GM12878 (cell line): ENCODE measurements at regions of chr13 and their contacts with region 1.

Region 1: DNA sequence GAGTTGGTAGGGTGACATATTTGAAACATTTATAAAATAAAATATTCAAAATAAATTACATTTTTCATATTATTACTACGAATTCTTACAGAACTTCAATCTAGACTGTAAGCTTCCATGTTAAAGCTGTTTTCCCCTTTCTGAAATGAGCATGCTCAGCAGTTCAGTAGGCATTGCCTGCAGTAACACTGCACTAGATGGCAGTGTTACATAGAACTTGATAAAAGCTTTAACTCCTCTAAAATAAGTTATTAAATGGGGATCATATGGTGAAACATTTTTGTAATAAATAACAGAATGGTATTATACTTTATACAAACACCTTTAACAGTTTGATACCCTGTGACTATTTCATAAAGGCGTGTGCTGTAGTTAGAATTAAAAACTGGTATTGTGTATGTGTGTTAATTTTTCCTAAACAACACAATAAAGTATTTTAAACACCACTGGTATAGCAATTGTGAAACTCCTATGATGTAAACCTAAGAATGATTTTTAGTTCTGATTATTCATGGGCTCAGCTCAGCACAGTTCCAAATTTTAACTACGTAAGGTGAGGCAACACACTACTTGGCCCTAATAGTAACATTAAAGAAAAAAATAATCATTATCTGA is 11.6 kb upstream of the GPR18 start:
- DNase-seq: no peak
- ATAC-seq: peak; percentile 89
- H3K4me3 ChIP-seq: no peak overlapping the region
- H3K27ac ChIP-seq: peak overlapping the region; percentile 37; the same call in 1 of the 2 replicates
- H3K4me1 ChIP-seq: peaks cover 24% of the 10 kb centered on the region
- H3K27me3 ChIP-seq: no peaks in the 10 kb centered on the region
- CTCF ChIP-seq: peak; percentile 74 to 85 (median 81)
- EP300 ChIP-seq: no peak
- POLR2A ChIP-seq: no peak
- RAD21 ChIP-seq: peak; percentile 91

Region 2: GRCh38 chr13:98761126-98761985 is 508.4 kb before region 1 on chr13:
- CTCF ChIA-PET with region 1: no interaction called
- POLR2A ChIA-PET with region 1: no interaction called
- RAD21 ChIA-PET with region 1: no interaction called
- SMC1A ChIA-PET with region 1: no interaction called
- in situ Hi-C with region 1: no loop called
- intact Hi-C with region 1: no loop called
- DNase-seq: peak; percentile 11
- ATAC-seq: peak; percentile 92
- H3K4me3 ChIP-seq: peak overlapping the region; percentile 19; the same call in 1 of the 2 replicates
- H3K27ac ChIP-seq: no peak overlapping the region
- H3K4me1 ChIP-seq: no peaks in the 10 kb centered on the region; the same call in 1 of the 2 replicates
- H3K27me3 ChIP-seq: no peaks in the 10 kb centered on the region; a peak in 1 of 4 replicates
- CTCF ChIP-seq: no peak
- EP300 ChIP-seq: no peak
- POLR2A ChIP-seq: no peak
- RAD21 ChIP-seq: no peak

Region 3: DNA sequence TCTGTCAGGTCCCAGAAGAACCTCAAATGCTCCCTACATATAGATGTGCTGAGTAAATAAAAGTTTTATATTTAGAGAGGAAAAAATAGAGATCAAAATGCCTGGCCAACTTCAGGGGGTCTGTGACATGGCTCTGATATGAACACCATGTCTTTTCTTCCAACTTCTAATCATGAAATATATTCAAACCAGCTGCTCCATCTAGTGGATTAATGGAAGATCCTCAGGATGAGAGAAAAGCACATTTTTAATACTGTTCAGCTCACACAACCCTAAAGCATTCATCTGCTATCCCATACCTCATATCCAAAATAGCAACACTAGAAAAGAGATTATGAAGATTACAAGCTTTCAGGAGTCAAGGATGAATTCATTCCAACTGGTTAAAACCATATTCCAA is 235.9 kb before region 1 on chr13:
- CTCF ChIA-PET with region 1: interaction called, 20 read pairs
- POLR2A ChIA-PET with region 1: no interaction called
- RAD21 ChIA-PET with region 1: interaction called, 11 read pairs
- SMC1A ChIA-PET with region 1: interaction called, 5 read pairs
- in situ Hi-C with region 1: no loop called
- intact Hi-C with region 1: loop called (anchors 5 kb)
- DNase-seq: no peak
- ATAC-seq: peak; percentile 44; the same call in 2 of the 3 replicates
- H3K4me3 ChIP-seq: no peak overlapping the region
- H3K27ac ChIP-seq: no peak overlapping the region
- H3K4me1 ChIP-seq: no peaks in the 10 kb centered on the region
- H3K27me3 ChIP-seq: no peaks in the 10 kb centered on the region
- CTCF ChIP-seq: peak; percentile 35 to 38 (median 37); a peak in 4 of 6 replicates
- EP300 ChIP-seq: no peak
- POLR2A ChIP-seq: no peak
- RAD21 ChIP-seq: peak; percentile 58

Region 4: GRCh38 chr13:99228737-99229691 is 40.7 kb before region 1 on chr13:
- CTCF ChIA-PET with region 1: interaction called, 11 read pairs
- POLR2A ChIA-PET with region 1: no interaction called
- RAD21 ChIA-PET with region 1: interaction called, 4 read pairs
- SMC1A ChIA-PET with region 1: interaction called, 9 read pairs
- in situ Hi-C with region 1: no loop called
- intact Hi-C with region 1: no loop called
- DNase-seq: peak; percentile 91
- ATAC-seq: peak; percentile 90
- H3K4me3 ChIP-seq: peak overlapping the region; percentile 42; the same call in 1 of the 2 replicates
- H3K27ac ChIP-seq: peak overlapping the region; percentile 87
- H3K4me1 ChIP-seq: peaks cover 49% of the 10 kb centered on the region
- H3K27me3 ChIP-seq: no peaks in the 10 kb centered on the region
- CTCF ChIP-seq: no peak
- EP300 ChIP-seq: peak; percentile 93 to 96
- POLR2A ChIP-seq: no peak
- RAD21 ChIP-seq: 0 out of 2 replicates have a peak, but pooled peaks have one; percentile 23

Region 5: DNA sequence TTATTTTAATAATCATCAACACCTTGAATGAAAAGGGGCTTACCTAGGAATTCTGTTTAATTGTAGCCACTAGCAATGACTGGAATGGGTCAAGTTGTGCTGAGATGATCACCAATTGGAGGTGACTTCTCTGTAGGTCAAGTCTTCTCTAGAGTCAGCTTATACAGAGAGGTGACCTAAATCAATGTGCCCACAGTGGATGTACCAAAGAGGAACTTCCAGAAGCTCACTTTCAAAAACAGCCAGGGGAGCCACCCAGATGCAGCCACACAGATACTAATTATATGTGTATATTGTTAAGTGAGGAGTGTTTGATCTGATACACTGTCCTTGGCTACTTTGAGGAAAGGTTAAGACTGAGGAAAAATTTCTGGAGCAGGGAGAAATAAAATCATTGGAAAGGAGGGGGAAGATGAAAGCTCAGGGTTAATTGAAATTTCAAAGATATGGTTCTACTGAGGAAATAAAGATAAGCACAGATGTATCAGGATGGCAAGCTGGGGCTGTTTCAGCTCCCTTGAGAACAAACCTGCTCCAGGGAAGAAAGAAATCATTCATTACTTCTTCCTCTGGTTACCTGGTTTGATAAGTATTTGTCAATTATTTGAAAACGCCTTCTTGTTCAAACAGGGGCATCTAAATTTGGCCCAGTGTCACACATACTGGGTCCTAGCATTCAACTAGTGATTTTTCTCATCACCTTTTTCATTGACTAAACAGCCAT is 32.3 kb after region 1 on chr13:
- CTCF ChIA-PET with region 1: interaction called, 61 read pairs
- POLR2A ChIA-PET with region 1: interaction called, 4 read pairs
- RAD21 ChIA-PET with region 1: interaction called, 247 read pairs
- SMC1A ChIA-PET with region 1: interaction called, 264 read pairs
- in situ Hi-C with region 1: no loop called
- intact Hi-C with region 1: loop called (anchors 2 kb)
- DNase-seq: no peak
- ATAC-seq: peak; percentile 39
- H3K4me3 ChIP-seq: peak overlapping the region; percentile 98
- H3K27ac ChIP-seq: peak overlapping the region; percentile 93
- H3K4me1 ChIP-seq: peaks cover 18% of the 10 kb centered on the region
- H3K27me3 ChIP-seq: no peaks in the 10 kb centered on the region
- CTCF ChIP-seq: no peak
- EP300 ChIP-seq: no peak
- POLR2A ChIP-seq: no peak
- RAD21 ChIP-seq: no peak

Region 6: GRCh38 chr13:99356158-99357091 is 86.7 kb after region 1 on chr13:
- CTCF ChIA-PET with region 1: interaction called, 20 read pairs
- POLR2A ChIA-PET with region 1: no interaction called
- RAD21 ChIA-PET with region 1: interaction called, 40 read pairs
- SMC1A ChIA-PET with region 1: interaction called, 70 read pairs
- in situ Hi-C with region 1: no loop called
- intact Hi-C with region 1: no loop called
- DNase-seq: peak; percentile 92
- ATAC-seq: peak; percentile 81
- H3K4me3 ChIP-seq: peak overlapping the region; percentile 41; the same call in 1 of the 2 replicates
- H3K27ac ChIP-seq: peak overlapping the region; percentile 81
- H3K4me1 ChIP-seq: peaks cover 65% of the 10 kb centered on the region
- H3K27me3 ChIP-seq: no peaks in the 10 kb centered on the region
- CTCF ChIP-seq: no peak
- EP300 ChIP-seq: peak; percentile 43 to 83; a peak in 3 of 4 replicates
- POLR2A ChIP-seq: no peak
- RAD21 ChIP-seq: no peak

Region 7: DNA sequence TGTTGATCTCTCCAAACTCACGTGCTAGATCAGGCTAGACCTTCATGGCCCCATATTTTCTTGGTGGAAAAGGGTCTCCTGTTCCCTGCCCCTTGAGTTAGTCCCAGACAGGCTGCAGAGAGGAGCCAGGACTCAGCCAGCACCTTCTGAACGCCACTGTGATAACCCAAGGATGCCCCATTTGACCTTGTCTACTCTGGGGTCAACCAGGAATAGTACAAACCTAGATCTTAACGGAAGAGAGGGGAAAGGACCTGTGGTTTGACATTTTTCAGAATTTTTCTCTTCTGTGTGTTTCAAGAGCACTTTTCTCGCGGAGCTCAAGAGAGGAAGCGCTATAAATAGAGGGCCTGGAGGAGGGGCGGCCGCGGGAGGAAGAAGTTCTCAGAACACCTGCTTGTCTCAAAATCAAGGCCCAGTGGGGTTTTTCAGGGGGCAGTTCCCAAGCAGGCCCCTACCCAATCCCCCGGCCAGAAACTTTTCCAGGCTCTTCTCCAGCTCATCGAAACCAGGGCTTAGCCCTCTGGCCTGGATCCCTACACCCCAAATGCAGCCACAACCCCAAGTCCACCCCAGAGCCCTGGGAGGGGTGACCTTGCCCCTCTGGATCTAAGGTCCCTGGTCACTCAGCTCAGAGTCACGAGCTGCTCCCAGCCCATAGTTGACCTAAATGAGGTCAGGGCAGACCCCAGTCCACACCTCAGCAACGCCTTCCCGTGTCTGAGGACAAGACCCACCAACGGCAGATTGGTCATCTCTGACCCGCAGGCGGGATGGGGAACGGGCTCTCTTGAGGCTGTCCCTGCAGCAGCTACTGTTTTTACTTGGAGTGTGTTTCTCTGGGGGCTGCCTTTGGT is 156.0 kb after region 1 on chr13:
- CTCF ChIA-PET with region 1: interaction called, 38 read pairs
- POLR2A ChIA-PET with region 1: interaction called, 4 read pairs
- RAD21 ChIA-PET with region 1: interaction called, 24 read pairs
- SMC1A ChIA-PET with region 1: interaction called, 11 read pairs
- in situ Hi-C with region 1: no loop called
- intact Hi-C with region 1: no loop called
- DNase-seq: peak; percentile 90
- ATAC-seq: peak; percentile 71
- H3K4me3 ChIP-seq: peak overlapping the region; percentile 10
- H3K27ac ChIP-seq: peak overlapping the region; percentile 100
- H3K4me1 ChIP-seq: peaks cover 62% of the 10 kb centered on the region
- H3K27me3 ChIP-seq: no peaks in the 10 kb centered on the region
- CTCF ChIP-seq: no peak
- EP300 ChIP-seq: peak; percentile 55 to 89; a peak in 3 of 4 replicates
- POLR2A ChIP-seq: no peak
- RAD21 ChIP-seq: peak; percentile 18; the same call in 1 of the 2 replicates

Region 8: DNA sequence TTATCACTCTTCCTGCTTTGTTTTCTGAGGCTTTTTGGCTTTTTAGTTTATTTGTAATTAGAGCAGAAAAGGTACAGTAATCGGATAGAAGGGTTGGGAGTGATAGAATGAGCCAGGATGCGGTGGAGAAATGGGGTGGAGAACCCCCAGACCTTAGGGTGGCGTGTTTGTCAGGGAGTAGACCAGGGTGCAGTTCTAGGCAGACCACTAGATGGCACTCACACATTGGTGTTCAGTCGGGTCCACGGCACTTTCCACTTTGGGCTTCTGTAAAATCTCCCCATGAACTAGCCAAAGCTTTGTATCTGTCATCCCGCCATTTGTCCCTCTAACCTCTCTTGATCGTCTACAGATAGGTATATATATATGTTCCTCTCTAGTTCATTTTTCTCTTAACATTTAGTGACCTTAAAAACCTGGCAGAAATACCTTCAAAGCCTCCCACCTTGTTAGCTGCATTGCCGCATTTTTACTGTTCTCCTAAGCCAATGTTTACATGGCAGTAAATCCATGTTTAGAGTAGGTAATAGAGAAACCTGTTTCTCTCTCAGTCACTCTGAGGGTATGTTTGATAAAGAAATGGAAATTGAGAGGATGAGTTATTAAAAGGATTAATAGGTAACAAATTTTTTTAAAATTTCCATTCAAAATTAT is 386.5 kb after region 1 on chr13:
- CTCF ChIA-PET with region 1: interaction called, 3 read pairs
- POLR2A ChIA-PET with region 1: no interaction called
- RAD21 ChIA-PET with region 1: no interaction called
- SMC1A ChIA-PET with region 1: interaction called, 3 read pairs
- in situ Hi-C with region 1: no loop called
- intact Hi-C with region 1: loop called (anchors 5 kb)
- DNase-seq: peak; percentile 40
- ATAC-seq: peak; percentile 92
- H3K4me3 ChIP-seq: no peak overlapping the region
- H3K27ac ChIP-seq: no peak overlapping the region
- H3K4me1 ChIP-seq: peaks cover 7% of the 10 kb centered on the region
- H3K27me3 ChIP-seq: no peaks in the 10 kb centered on the region
- CTCF ChIP-seq: peak; percentile 91 to 93 (median 91)
- EP300 ChIP-seq: no peak
- POLR2A ChIP-seq: no peak
- RAD21 ChIP-seq: peak; percentile 88